PC-9 (cell line): ENCODE measurements at regions of chr20 and their contacts with region 1.

Region 1: DNA sequence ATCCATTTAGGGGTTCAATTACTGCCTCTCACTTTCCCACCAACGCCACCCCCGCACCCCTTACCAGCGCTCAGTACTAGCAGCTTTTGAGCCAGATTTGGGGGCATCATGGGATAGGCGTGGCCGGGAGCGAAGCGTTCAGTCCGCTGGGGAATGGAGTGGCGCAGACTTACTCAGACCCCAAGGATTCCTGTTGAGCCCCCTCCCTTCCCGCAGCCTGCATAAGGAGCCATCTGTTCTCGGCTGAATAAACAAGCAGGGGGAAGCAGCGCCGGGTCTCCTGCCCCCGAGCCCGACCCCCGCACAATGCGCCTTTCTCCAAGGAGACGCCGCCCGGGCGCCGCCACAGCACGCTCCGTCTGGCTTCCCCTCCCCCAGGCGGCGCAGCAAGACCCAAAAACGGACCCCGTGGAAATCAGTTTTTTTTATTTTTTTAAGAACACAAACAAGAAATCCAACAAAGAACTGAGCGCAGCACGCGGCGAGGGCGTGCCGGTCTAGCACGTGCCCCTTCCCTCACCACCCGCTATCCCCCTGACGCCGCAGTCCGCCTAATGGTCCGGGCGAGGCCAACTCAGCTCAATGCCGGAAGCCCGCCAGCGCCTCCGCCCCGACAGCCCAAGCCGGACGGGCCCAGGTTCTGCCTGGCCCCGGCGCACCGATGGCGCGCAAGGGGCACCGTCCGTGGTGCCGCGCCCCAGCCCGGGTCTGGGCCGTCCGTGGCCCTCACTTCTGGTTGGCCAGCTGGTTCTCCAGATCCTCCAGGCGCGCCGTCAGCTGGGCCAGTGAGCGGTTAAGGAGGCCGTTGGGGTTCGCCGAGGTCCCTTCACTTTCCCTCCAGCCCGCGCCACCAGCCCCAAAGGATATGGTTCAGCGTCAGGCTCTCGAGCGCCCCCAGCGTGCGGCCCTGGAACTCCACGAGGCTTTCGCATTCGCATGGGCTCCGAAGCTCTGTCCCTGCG is 13.3 kb upstream of the RBPJL start:
- DNase-seq: peak; percentile 61 to 91
- H3K4me3 ChIP-seq: peak overlapping the region; percentile 60
- H3K27ac ChIP-seq: no peak overlapping the region
- H3K4me1 ChIP-seq: peaks cover 15% of the 10 kb centered on the region
- H3K27me3 ChIP-seq: no peaks in the 10 kb centered on the region
- CTCF ChIP-seq: peak; percentile 97

Region 2: GRCh38 chr20:44909872-44910689 is 383.2 kb before region 1 on chr20 and contains the start of gene PABPC1L:
- CTCF ChIA-PET with region 1: interaction called, 8 read pairs
- POLR2A ChIA-PET with region 1: interaction called, 5 read pairs
- intact Hi-C with region 1: loop called (anchors 5 kb)
- DNase-seq: peak; percentile 76 to 89
- H3K4me3 ChIP-seq: peak within 1 kb of the TSS; percentile 69
- H3K27ac ChIP-seq: 0 out of 2 replicates have a peak within 1 kb of the TSS, but pooled peaks have one; percentile 24
- H3K4me1 ChIP-seq: peaks cover 4% of the 10 kb centered on the region; the same call in 1 of the 2 replicates
- H3K27me3 ChIP-seq: no peaks in the 10 kb centered on the region
- CTCF ChIP-seq: no peak
- total RNA-seq, gene PABPC1L: 132 and 156 TPM in 2 replicates

Region 3: GRCh38 chr20:45095753-45096371 is 197.5 kb before region 1 on chr20:
- CTCF ChIA-PET with region 1: interaction called, 19 read pairs
- POLR2A ChIA-PET with region 1: no interaction called
- intact Hi-C with region 1: loop called (anchors 1 kb)
- DNase-seq: peak; percentile 54 to 65
- H3K4me3 ChIP-seq: no peak overlapping the region
- H3K27ac ChIP-seq: no peak overlapping the region
- H3K4me1 ChIP-seq: no peaks in the 10 kb centered on the region
- H3K27me3 ChIP-seq: no peaks in the 10 kb centered on the region
- CTCF ChIP-seq: peak; percentile 91

Region 4: GRCh38 chr20:45118028-45118427 is 175.3 kb before region 1 on chr20:
- CTCF ChIA-PET with region 1: no interaction called
- POLR2A ChIA-PET with region 1: no interaction called
- intact Hi-C with region 1: no loop called
- DNase-seq: no peak
- H3K4me3 ChIP-seq: no peak overlapping the region
- H3K27ac ChIP-seq: no peak overlapping the region
- H3K4me1 ChIP-seq: no peaks in the 10 kb centered on the region
- H3K27me3 ChIP-seq: no peaks in the 10 kb centered on the region
- CTCF ChIP-seq: peak; percentile 47; the same call in 1 of the 2 replicates

Region 5: DNA sequence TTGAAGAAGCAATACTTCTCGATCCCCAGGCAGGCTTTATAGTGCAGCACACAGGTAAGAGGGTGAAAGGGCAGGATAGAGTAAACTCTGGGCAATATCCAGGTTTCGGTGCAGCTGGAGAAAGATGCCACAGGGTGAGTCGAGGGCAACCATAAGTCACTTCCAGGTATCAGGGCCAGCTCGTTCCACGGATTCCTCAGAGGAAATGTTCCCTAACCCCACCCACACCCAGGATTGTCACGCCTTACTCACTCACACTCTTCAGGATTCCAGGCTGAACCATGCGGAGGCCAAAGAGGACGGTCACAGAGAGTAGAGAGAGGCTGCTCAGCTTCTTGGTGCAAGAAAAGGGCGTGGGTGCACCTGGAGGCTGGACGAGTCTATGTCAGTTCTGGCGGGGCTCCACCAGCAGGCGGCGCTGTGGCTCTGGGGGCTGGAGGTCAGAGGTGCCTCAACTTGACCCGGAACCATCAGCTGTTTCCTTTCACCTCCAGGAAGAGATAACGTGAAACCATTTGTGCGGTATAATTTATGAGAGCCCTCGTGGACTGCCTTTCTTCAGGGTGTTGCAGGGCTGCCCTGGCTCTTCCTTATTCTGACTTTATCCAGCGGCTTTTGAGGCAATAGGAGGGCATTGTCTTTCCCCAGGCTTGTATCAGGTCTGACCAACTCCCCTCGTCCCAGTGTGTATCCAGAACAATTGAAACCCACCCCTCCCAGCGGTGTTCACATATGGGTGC is 154.6 kb before region 1 on chr20:
- CTCF ChIA-PET with region 1: interaction called, 14 read pairs
- POLR2A ChIA-PET with region 1: no interaction called
- intact Hi-C with region 1: loop called (anchors 1 kb)
- DNase-seq: peak; percentile 62 to 73
- H3K4me3 ChIP-seq: no peak overlapping the region
- H3K27ac ChIP-seq: no peak overlapping the region
- H3K4me1 ChIP-seq: 0 out of 2 replicates have a peak, but pooled peaks cover 7% of the 10 kb centered on the region
- H3K27me3 ChIP-seq: no peaks in the 10 kb centered on the region
- CTCF ChIP-seq: peak; percentile 97

Region 6: GRCh38 chr20:45229264-45230056 is 63.9 kb before region 1 on chr20:
- CTCF ChIA-PET with region 1: interaction called, 8 read pairs
- POLR2A ChIA-PET with region 1: no interaction called
- intact Hi-C with region 1: loop called (anchors 2 kb)
- DNase-seq: peak; percentile 66 to 69
- H3K4me3 ChIP-seq: peak overlapping the region; percentile 25; the same call in 1 of the 2 replicates
- H3K27ac ChIP-seq: no peak overlapping the region
- H3K4me1 ChIP-seq: peaks cover 6% of the 10 kb centered on the region
- H3K27me3 ChIP-seq: no peaks in the 10 kb centered on the region
- CTCF ChIP-seq: peak; percentile 96

Region 7: DNA sequence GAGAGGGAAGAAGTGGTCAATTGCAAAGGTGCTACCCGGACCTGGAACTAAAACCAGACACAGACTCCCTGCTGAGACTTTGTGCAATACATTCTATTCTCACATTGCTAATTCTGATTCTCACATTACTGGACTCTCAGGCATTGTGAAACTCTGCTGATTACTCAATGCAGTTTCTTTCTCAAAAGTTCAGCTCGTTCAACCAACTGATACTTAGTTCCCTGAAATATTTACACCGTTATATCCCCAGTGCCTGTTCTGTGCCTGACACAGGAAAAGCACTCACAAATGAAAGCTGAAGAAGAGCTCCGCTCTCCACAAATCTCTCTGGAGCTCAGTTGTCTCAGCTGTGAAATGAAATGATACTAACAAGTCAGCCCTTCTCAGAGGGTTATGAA is 38.5 kb before region 1 on chr20:
- CTCF ChIA-PET with region 1: interaction called, 4 read pairs
- POLR2A ChIA-PET with region 1: interaction called, 4 read pairs
- intact Hi-C with region 1: loop called (anchors 1 kb)
- DNase-seq: peak in 1 of 2 experiments; percentile 95
- H3K4me3 ChIP-seq: peak overlapping the region; percentile 73; the same call in 1 of the 2 replicates
- H3K27ac ChIP-seq: peak overlapping the region; percentile 97
- H3K4me1 ChIP-seq: peaks cover 68% of the 10 kb centered on the region
- H3K27me3 ChIP-seq: no peaks in the 10 kb centered on the region
- CTCF ChIP-seq: no peak

Region 8: GRCh38 chr20:45266977-45267376 is 26.3 kb before region 1 on chr20:
- CTCF ChIA-PET with region 1: no interaction called
- POLR2A ChIA-PET with region 1: no interaction called
- intact Hi-C with region 1: no loop called
- DNase-seq: peak in 1 of 2 experiments; percentile 63
- H3K4me3 ChIP-seq: no peak overlapping the region
- H3K27ac ChIP-seq: peak overlapping the region; percentile 20; the same call in 1 of the 2 replicates
- H3K4me1 ChIP-seq: peaks cover 12% of the 10 kb centered on the region
- H3K27me3 ChIP-seq: no peaks in the 10 kb centered on the region
- CTCF ChIP-seq: no peak

Region 9: DNA sequence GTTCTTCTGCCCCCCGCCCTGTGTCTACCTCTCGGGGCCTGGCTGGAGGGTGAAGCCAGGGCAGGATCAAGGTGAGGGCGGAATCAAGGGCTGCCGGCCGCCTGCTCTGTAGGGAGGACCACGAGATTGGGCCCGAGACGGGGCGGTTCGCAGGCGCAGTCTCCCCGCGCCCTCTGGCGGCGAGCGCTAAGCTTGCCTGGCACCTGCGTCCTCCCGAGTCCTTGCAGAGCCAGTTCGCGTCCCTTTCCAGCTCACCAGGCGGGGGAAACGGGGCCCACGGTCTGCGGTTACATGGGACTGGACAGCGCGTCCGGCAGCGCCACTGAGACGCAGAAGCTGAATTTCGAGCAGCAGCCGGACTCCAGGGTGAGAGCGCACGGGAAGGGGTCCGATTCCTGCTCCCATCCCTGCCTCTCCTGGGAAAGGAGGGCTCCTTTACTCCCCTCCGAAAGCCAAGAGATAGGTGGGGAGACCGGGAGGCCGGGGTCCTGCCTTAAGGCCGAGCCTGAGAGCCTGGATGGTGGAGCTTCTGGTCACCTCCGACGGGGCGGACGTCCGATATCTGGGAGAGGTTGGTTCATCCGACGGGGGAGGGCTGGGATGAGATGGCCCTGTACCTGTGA is 18.4 kb after region 1 on chr20:
- CTCF ChIA-PET with region 1: interaction called, 4 read pairs
- POLR2A ChIA-PET with region 1: interaction called, 27 read pairs
- intact Hi-C with region 1: no loop called
- DNase-seq: peak in 1 of 2 experiments; percentile 56
- H3K4me3 ChIP-seq: no peak overlapping the region
- H3K27ac ChIP-seq: no peak overlapping the region
- H3K4me1 ChIP-seq: no peaks in the 10 kb centered on the region
- H3K27me3 ChIP-seq: no peaks in the 10 kb centered on the region
- CTCF ChIP-seq: peak; percentile 75

Region 10: GRCh38 chr20:45450097-45450818 is 156.9 kb after region 1 on chr20:
- CTCF ChIA-PET with region 1: no interaction called
- POLR2A ChIA-PET with region 1: no interaction called
- intact Hi-C with region 1: no loop called
- DNase-seq: peak in 1 of 2 experiments; percentile 71
- H3K4me3 ChIP-seq: no peak overlapping the region
- H3K27ac ChIP-seq: no peak overlapping the region
- H3K4me1 ChIP-seq: peaks cover 11% of the 10 kb centered on the region
- H3K27me3 ChIP-seq: no peaks in the 10 kb centered on the region
- CTCF ChIP-seq: peak; percentile 81